ENCODE measurements at regions of chr3 and their contacts with region 1.

Region 1: GRCh38 chr3:196708467-196708866 is 3.6 kb downstream of the CEP19 start:
- DNase-seq: no peak
- H3K4me3 ChIP-seq: no peak overlapping the region
- H3K4me3 Mint-ChIP-seq: no peak overlapping the region
- H3K27ac ChIP-seq: no peak overlapping the region
- H3K27ac Mint-ChIP-seq: no peak overlapping the region
- H3K4me1 ChIP-seq: peaks cover 31 to 43% of the 10 kb centered on the region in 2 donors
- H3K4me1 Mint-ChIP-seq: peaks cover 30% of the 10 kb centered on the region
- H3K27me3 ChIP-seq: no peaks in the 10 kb centered on the region
- H3K27me3 Mint-ChIP-seq: peaks cover 0 to 2% (median 1%) of the 10 kb centered on the region in 3 donors
- CTCF ChIP-seq: no peak

Region 2: DNA sequence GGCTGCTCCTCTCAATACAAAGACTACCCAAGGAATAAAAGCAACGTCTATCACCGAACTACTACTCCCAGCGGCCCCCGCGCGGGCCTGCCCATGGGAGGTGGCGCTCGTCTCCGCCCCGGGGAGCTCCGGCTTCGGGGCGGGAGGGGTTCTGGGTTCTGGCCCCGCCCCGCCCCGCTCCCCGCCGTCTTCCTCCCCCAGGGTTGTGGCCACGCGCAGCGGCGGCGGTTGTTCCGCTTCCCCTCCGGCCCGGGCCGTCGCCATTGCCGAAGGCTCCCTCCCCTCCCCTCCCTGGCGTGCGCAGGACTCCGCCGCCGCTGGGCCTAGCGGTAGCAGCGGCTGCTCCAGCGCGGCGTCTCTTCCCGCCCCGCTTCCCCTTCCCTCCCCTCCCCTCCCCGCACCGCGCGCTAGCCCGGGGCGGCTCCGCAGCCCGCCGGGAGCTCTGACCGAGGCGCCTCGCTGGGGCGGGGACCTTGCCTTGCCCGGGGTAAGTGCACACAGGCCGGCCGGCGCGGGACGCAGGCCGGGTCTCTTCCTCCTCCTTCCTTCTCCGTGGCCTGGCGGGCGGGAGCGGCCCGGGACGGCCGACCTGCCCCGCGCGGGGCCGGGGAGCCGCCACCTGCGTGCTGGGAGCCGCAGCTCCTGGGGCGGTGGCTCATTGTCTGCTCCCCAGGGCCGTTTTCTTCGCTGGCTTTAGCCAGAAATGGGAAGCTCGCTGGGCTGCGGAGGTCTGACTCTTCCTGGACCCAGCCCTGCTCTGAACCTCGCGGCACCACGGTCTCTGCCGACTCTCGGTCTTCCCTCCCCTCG is 31.4 kb after region 1 on chr3 and contains the start of gene PAK2:
- intact Hi-C with region 1: loop called in 1 of 2 experiments (anchors 5 kb)
- DNase-seq: peak; percentile 87 to 90 (median 89)
- H3K4me3 ChIP-seq: peak within 1 kb of the TSS; percentile 75 to 98 (median 95)
- H3K4me3 Mint-ChIP-seq: peak within 1 kb of the TSS; percentile 98 to 100
- H3K27ac ChIP-seq: peak within 1 kb of the TSS; percentile 88 to 97
- H3K27ac Mint-ChIP-seq: peak within 1 kb of the TSS; percentile 96 to 99 (median 98)
- H3K4me1 ChIP-seq: peaks cover 19 to 31% of the 10 kb centered on the region in 2 donors
- H3K4me1 Mint-ChIP-seq: peaks cover 27% of the 10 kb centered on the region
- H3K27me3 ChIP-seq: no peaks in the 10 kb centered on the region
- H3K27me3 Mint-ChIP-seq: peaks cover 0 to 1% (median 0%) of the 10 kb centered on the region in 3 donors
- CTCF ChIP-seq: no peak
- polyA plus RNA-seq, gene PAK2: 32.4 to 44.2 (median 33.2) TPM

Region 3: GRCh38 chr3:196774191-196774820 is 65.8 kb after region 1 on chr3:
- intact Hi-C with region 1: no loop called
- DNase-seq: peak in 1 of 3 donors; percentile 41
- H3K4me3 ChIP-seq: no peak overlapping the region
- H3K4me3 Mint-ChIP-seq: no peak overlapping the region
- H3K27ac ChIP-seq: peak overlapping the region in 1 of 2 donors; percentile 24
- H3K27ac Mint-ChIP-seq: peak overlapping the region in 6 of 7 donors; percentile 20 to 79 (median 44)
- H3K4me1 ChIP-seq: no peaks in the 10 kb centered on the region
- H3K4me1 Mint-ChIP-seq: peaks cover 38% of the 10 kb centered on the region
- H3K27me3 ChIP-seq: no peaks in the 10 kb centered on the region
- H3K27me3 Mint-ChIP-seq: peaks cover 0 to 1% (median 0%) of the 10 kb centered on the region in 3 donors
- CTCF ChIP-seq: no peak

Measured in CD14-positive monocyte (primary cell).